ENCODE measurements at regions of chr14 and their contacts with region 1.

Region 1: DNA sequence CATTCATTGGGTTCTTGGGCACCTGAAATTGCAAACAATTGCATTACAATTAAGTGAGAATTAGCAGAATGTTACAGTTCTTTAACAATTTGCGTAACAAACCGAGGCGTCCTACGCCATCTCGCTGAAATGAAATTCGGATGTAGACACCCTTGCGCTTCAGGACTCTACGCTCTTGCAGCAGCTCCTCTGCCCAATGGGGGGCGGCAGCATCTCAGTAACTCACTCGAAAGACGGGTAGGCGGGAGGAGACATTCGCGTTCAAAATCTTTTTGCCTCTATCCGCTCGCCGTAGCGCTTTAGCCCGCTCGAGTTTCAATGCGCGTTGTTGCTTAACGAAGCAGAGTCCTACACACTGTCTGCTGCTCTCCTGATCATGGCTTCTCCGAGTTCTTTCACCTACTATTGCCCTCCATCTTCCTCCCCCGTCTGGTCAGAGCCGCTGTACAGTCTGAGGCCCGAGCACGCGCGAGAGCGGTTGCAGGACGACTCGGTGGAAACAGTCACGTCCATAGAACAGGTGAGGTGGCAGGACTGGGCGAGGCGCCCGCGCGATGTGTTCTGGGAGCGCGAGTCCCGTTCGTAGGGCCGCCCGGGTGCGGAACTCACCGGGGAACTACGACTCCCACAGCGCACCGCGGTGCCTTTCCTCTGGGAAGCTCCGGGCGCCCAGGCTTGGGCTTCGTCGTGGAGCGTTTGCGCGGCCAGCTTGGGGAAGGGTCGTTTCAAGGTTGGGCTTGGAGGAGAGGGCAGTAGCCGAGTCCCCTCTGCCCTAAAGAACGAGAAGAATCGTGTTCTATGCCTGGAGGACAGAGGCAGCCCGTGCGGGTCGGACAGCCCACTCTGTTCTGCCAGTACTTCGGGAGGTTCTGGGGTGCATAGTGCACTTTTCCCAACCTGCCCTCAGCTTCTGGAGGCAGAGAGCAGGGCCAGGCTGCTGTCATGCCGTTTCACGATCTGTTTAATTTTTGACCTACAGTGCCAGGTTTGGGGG is at the start of gene FNTB:
- DNase-seq: peak; percentile 97
- H3K4me3 ChIP-seq: peak within 1 kb of the TSS; percentile 63 to 84 (median 67)
- H3K27ac ChIP-seq: peak within 1 kb of the TSS; percentile 82 to 90 (median 88)
- H3K4me1 ChIP-seq: peaks cover 0 to 22% (median 15%) of the 10 kb centered on the region in 4 donors
- H3K27me3 ChIP-seq: no peaks in the 10 kb centered on the region
- CTCF ChIP-seq: peak; percentile 55 to 80 (median 66)
- EP300 ChIP-seq: no peak
- POLR2A ChIP-seq: no peak
- total RNA-seq, gene FNTB: 10.7 to 13.0 (median 11.9) TPM

Region 2: GRCh38 chr14:64823305-64823861 is 163.5 kb before region 1 on chr14:
- intact Hi-C with region 1: loop called (anchors 1 kb)
- DNase-seq: peak; percentile 86
- H3K4me3 ChIP-seq: no peak overlapping the region
- H3K27ac ChIP-seq: no peak overlapping the region
- H3K4me1 ChIP-seq: peaks cover 0 to 8% (median 6%) of the 10 kb centered on the region in 4 donors
- H3K27me3 ChIP-seq: no peaks in the 10 kb centered on the region
- CTCF ChIP-seq: peak; percentile 43 to 80 (median 79)
- EP300 ChIP-seq: no peak
- POLR2A ChIP-seq: no peak

Region 3: DNA sequence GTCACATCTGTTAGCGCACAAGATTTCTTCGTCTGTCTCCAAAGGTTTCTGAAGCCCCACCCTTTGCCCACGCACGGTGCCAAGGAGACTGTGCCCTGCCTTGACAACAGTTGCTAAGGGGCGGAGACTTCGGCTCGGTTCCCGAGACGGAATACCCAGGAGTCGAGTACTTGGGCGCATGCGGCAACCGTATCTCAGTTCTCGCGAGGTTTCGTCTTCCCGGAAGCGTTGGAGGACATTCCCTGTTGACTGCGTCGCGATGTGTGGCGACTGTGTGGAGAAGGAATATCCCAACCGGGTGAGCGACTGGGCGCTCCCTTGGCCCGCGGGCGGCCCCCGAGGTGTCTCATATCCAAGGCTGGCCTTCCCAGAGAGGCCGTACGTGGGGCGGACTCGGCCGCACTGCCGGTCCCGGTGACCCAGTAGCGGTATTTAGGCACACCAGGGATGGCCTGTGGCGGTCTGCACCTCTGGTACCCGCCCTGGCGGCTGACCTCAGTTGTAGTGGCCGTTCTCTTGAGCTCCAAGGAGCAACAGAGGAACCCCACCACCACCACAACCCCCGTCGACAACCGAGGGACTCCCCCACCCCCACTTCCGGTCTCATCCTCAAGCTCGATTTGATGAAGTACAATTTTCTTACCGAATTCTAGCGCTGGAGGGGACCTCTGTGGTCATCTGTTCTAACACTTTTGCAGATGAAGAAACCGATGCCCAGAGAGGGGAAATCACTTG is 72.5 kb before region 1 on chr14 and contains the start of gene CHURC1:
- intact Hi-C with region 1: loop called (anchors 5 kb)
- DNase-seq: peak; percentile 99
- H3K4me3 ChIP-seq: peak within 1 kb of the TSS; percentile 65 to 94 (median 92)
- H3K27ac ChIP-seq: peak within 1 kb of the TSS; percentile 86 to 98 (median 94)
- H3K4me1 ChIP-seq: peaks cover 0 to 38% (median 30%) of the 10 kb centered on the region in 4 donors
- H3K27me3 ChIP-seq: no peaks in the 10 kb centered on the region
- CTCF ChIP-seq: no peak
- EP300 ChIP-seq: no peak
- POLR2A ChIP-seq: peak; percentile 71 to 84
- total RNA-seq, gene CHURC1: 110 to 161 (median 142) TPM

Region 4: DNA sequence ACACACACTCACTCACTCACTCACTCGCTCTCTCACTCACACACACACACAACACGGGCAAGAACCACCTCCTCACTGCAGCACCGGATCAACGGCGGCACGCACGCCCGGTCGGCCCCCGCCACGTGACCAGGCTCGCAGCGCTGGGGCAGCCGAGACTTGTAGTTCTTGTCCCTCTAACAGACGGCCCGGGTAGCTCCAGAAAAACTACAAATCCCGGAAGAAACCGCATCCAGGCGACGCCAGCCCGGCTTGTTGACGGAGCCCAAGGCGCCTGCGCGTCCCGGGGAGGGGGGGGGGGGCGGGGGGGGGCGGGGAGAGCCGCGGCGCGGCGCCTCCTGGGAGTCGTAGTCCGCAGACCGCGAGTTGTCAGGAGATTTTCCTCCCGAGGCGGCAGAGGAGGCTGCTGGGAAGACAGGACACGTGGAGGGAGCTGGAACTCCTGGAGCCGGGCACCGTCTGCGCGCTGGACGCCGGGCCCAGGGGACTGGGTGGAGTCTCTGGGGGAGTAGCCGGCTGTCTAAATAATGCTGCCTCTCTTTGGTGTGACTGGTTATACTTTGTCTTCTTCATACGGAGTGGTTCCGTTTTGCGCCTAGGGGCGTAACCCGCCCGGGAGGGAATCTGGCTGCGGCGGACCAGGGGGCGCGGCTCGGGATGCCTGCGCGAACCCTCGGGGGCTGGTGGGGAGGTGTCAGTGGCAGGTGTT is 115.7 kb after region 1 on chr14 and contains the start of gene MAX:
- intact Hi-C with region 1: loop called (anchors 1 kb)
- DNase-seq: peak; percentile 99
- H3K4me3 ChIP-seq: peak within 1 kb of the TSS; percentile 68 to 95 (median 94)
- H3K27ac ChIP-seq: peak within 1 kb of the TSS; percentile 86 to 96 (median 90)
- H3K4me1 ChIP-seq: peaks cover 0 to 48% (median 39%) of the 10 kb centered on the region in 4 donors
- H3K27me3 ChIP-seq: no peaks in the 10 kb centered on the region
- CTCF ChIP-seq: no peak
- EP300 ChIP-seq: no peak
- POLR2A ChIP-seq: peak; percentile 82 to 87
- total RNA-seq, gene MAX: 61.6 to 71.7 (median 65.0) TPM

Region 5: DNA sequence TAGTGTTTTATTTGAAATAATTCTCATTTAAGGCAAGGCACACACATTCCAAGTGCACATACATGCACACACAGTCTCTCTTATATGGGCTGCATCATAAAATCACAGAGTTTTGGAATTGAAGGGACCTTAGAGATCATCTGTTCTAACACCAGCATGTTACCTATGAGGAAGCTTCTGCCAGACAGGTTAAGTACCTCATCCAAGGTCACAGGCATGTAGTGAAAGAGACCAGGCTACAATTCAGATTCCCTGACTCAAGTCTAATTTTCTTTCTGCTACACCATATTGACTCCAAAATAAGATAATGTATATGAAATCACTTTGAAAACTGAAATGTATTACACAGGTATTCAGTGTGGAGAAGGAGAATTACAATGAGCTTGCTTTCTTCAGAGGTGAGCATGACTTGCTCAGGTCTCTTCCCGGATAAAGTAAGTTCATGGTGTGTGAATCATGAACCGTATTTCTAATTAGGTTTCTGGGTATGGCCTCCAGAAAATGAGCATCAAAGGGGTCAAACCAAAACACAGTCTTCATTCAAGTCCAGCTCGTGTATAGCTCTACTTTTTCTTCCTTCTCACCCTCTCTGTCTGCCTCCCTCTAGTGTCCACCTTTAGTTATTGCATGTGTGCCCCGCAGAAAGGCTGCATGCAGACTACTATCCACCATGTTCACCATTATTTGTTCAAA is 837.6 kb after region 1 on chr14:
- intact Hi-C with region 1: loop called (anchors 5 kb)
- DNase-seq: no peak
- H3K4me3 ChIP-seq: no peak overlapping the region
- H3K27ac ChIP-seq: no peak overlapping the region
- H3K4me1 ChIP-seq: no peaks in the 10 kb centered on the region
- H3K27me3 ChIP-seq: peaks cover 0 to 5% (median 0%) of the 10 kb centered on the region in 3 donors
- CTCF ChIP-seq: peak; percentile 77 to 92 (median 87)
- EP300 ChIP-seq: no peak
- POLR2A ChIP-seq: no peak